ENCODE measurements at regions of chr14 and their contacts with region 1.

Region 1: GRCh38 chr14:24332268-24332993 is 2.4 kb downstream of the ADCY4 start:
- DNase-seq: peak; percentile 92
- H3K4me3 Mint-ChIP-seq: peak overlapping the region; percentile 66
- H3K27ac Mint-ChIP-seq: peak overlapping the region; percentile 46
- H3K4me1 Mint-ChIP-seq: peaks cover 63% of the 10 kb centered on the region
- H3K27me3 Mint-ChIP-seq: peaks cover 79% of the 10 kb centered on the region

Region 2: GRCh38 chr14:24343795-24344660 is 11.6 kb after region 1 on chr14:
- CTCF ChIA-PET with region 1: interaction called, 10 read pairs
- DNase-seq: no peak
- H3K4me3 Mint-ChIP-seq: no peak overlapping the region
- H3K27ac Mint-ChIP-seq: no peak overlapping the region
- H3K4me1 Mint-ChIP-seq: peaks cover 12% of the 10 kb centered on the region
- H3K27me3 Mint-ChIP-seq: peaks cover 45% of the 10 kb centered on the region

Region 3: GRCh38 chr14:24411443-24412389 is 79.3 kb after region 1 on chr14:
- CTCF ChIA-PET with region 1: interaction called, 10 read pairs
- DNase-seq: peak; percentile 55
- H3K4me3 Mint-ChIP-seq: no peak overlapping the region
- H3K27ac Mint-ChIP-seq: no peak overlapping the region
- H3K4me1 Mint-ChIP-seq: no peaks in the 10 kb centered on the region
- H3K27me3 Mint-ChIP-seq: peaks cover 63% of the 10 kb centered on the region

Region 4: DNA sequence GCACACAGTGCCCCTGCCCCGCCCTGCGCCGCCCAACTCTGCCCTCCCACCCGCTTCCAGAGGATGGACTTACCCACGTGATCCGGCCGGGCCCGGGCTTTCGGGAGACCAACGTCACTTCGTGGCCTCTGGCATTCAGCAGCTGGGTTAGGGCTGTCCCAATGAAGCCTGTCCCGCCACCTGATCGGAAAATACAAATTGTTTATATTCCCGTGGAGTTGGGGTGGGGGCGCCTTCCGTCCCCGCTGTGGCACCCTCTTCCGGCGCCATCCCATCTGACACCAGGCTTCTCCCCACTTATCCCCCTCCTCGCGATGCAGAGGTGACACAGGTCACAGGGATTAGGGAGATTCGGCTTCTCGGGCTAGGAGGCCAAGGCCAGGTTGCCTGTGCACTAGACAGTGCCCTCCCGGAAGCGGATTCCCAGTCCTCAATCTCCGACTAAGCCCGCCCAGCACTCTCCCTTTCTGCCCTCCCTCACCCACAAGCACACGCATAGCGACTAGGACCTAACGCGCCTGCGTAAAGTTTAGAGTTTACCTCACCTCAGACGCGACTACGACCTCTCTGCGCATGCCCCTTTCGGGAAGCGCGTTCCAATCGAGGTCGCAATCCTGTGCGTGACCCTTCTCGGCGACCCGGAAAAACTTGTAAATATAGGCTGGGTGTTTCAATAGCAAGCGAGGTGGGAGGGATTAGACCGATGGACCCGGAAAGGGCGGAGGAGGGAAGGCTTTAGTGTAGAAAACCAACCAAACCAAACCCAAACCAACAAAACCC is 110.0 kb after region 1 on chr14 and contains the start of gene SDR39U1:
- CTCF ChIA-PET with region 1: interaction called, 557 read pairs
- DNase-seq: peak; percentile 98
- H3K4me3 Mint-ChIP-seq: peak within 1 kb of the TSS; percentile 97
- H3K27ac Mint-ChIP-seq: peak within 1 kb of the TSS; percentile 98
- H3K4me1 Mint-ChIP-seq: peaks cover 55% of the 10 kb centered on the region
- H3K27me3 Mint-ChIP-seq: no peaks in the 10 kb centered on the region